GM13977 (cell line): ENCODE measurements at regions of chr21 and their contacts with region 1.

Region 1: GRCh38 chr21:25561668-25562641 is 45.3 kb downstream of the MRPL39 start:
- DNase-seq: peak; percentile 64
- CTCF ChIP-seq: peak; percentile 43

Region 2: DNA sequence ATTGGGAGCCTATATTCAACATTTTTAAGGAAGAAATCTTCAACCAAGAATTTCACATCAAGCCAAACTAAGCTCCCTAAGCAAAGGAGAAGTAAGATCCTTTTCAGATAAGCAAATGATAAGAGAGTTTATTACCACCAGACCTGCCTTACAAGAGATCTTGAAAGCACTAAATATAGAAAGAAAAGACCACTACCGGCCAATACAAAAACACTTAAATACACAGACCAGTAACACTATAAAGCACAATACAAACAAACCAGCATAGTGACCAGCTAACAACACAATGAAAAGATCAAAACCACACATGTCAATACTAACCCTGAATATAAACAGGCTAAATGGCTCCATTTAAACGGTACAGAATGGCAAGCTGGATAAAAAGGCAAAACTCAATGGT is 120.1 kb before region 1 on chr21:
- in situ Hi-C with region 1: loop called (anchors 10 kb)
- DNase-seq: no peak
- CTCF ChIP-seq: no peak

Region 3: DNA sequence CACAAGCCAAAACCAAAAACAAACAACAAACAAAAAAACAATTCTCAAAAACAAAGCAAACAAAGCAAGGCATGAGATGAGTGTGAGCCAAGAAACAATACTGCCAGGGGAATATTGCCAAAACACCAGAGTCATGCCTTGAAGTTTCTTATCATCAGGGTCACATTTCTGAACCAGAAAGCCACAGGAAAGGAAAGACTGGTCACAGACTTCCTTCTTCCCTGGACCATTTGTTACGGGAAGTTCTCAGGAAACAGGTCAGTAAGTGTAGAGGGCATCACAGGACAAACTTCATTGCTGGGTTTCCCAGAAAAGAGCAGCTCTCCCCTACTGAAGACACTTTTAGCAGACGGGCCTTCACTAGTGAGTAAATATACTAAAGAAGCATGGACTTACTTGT is 364.0 kb after region 1 on chr21:
- in situ Hi-C with region 1: no loop called
- DNase-seq: no peak
- CTCF ChIP-seq: no peak